ENCODE measurements at regions of chr3 and their contacts with region 1.

Region 1: GRCh38 chr3:194315088-194315964 is 35.8 kb downstream of the CPN2 start:
- DNase-seq: peak; percentile 88 to 91
- ATAC-seq: peak; percentile 85 to 90 (median 88)
- H3K4me3 ChIP-seq: peak overlapping the region; percentile 63
- H3K27ac ChIP-seq: no peak overlapping the region
- H3K4me1 ChIP-seq: peaks cover 7% of the 10 kb centered on the region
- H3K27me3 ChIP-seq: peaks cover 0 to 36% (median 5%) of the 10 kb centered on the region in 3 donors
- CTCF ChIP-seq: peak; percentile 98

Region 2: GRCh38 chr3:193780810-193781472 is 534.4 kb before region 1 on chr3:
- intact Hi-C with region 1: loop called (anchors 2 kb)
- DNase-seq: peak; percentile 73 to 81
- ATAC-seq: peak; percentile 86 to 96 (median 88)
- H3K4me3 ChIP-seq: no peak overlapping the region
- H3K27ac ChIP-seq: no peak overlapping the region
- H3K4me1 ChIP-seq: no peaks in the 10 kb centered on the region
- H3K27me3 ChIP-seq: peaks cover 0 to 15% (median 0%) of the 10 kb centered on the region in 3 donors
- CTCF ChIP-seq: peak; percentile 75

Region 3: GRCh38 chr3:194003125-194004057 is 311.9 kb before region 1 on chr3:
- intact Hi-C with region 1: loop called (anchors 5 to 10 kb)
- DNase-seq: peak; percentile 89 to 95
- ATAC-seq: peak; percentile 78 to 91 (median 82)
- H3K4me3 ChIP-seq: peak overlapping the region; percentile 60
- H3K27ac ChIP-seq: peak overlapping the region; percentile 88
- H3K4me1 ChIP-seq: peaks cover 47% of the 10 kb centered on the region
- H3K27me3 ChIP-seq: no peaks in the 10 kb centered on the region
- CTCF ChIP-seq: no peak

Region 4: GRCh38 chr3:194070634-194071409 is 244.5 kb before region 1 on chr3:
- intact Hi-C with region 1: loop called in 1 of 2 experiments (anchors 5 kb)
- DNase-seq: peak; percentile 90 to 93
- ATAC-seq: peak; percentile 89 to 94 (median 91)
- H3K4me3 ChIP-seq: peak overlapping the region; percentile 62
- H3K27ac ChIP-seq: peak overlapping the region; percentile 87
- H3K4me1 ChIP-seq: peaks cover 18% of the 10 kb centered on the region
- H3K27me3 ChIP-seq: no peaks in the 10 kb centered on the region
- CTCF ChIP-seq: no peak

Region 5: GRCh38 chr3:194158922-194159439 is 156.3 kb before region 1 on chr3:
- intact Hi-C with region 1: loop called in 1 of 2 experiments (anchors 5 kb)
- DNase-seq: no peak
- ATAC-seq: peak; percentile 58 to 93 (median 86)
- H3K4me3 ChIP-seq: no peak overlapping the region
- H3K27ac ChIP-seq: no peak overlapping the region
- H3K4me1 ChIP-seq: no peaks in the 10 kb centered on the region
- H3K27me3 ChIP-seq: no peaks in the 10 kb centered on the region
- CTCF ChIP-seq: no peak

Region 6: DNA sequence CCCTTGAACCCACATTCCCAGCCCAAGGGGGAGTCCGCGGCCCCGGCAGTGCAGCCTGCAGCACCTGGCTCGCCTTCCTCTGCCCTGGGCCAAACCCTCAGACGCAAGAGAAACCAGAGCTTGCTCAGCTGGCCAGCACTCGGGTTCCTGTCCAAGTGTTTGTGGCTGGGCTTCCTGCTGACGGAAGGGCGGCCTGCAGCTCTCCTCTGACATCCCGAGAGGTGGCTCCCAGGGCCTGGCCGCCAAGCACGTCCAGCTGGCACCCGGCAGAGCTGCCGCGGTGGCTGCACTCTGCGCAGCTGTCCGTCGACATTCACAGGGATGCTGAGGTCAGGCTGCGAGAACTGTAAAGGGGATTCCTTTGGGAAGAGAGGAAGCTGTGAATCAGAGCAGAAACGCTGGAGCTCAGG is 49.8 kb before region 1 on chr3:
- intact Hi-C with region 1: loop called (anchors 5 kb)
- DNase-seq: peak; percentile 91 to 97
- ATAC-seq: peak; percentile 95 to 97 (median 97)
- H3K4me3 ChIP-seq: no peak overlapping the region
- H3K27ac ChIP-seq: peak overlapping the region; percentile 64
- H3K4me1 ChIP-seq: peaks cover 25% of the 10 kb centered on the region
- H3K27me3 ChIP-seq: no peaks in the 10 kb centered on the region
- CTCF ChIP-seq: no peak

Region 7: DNA sequence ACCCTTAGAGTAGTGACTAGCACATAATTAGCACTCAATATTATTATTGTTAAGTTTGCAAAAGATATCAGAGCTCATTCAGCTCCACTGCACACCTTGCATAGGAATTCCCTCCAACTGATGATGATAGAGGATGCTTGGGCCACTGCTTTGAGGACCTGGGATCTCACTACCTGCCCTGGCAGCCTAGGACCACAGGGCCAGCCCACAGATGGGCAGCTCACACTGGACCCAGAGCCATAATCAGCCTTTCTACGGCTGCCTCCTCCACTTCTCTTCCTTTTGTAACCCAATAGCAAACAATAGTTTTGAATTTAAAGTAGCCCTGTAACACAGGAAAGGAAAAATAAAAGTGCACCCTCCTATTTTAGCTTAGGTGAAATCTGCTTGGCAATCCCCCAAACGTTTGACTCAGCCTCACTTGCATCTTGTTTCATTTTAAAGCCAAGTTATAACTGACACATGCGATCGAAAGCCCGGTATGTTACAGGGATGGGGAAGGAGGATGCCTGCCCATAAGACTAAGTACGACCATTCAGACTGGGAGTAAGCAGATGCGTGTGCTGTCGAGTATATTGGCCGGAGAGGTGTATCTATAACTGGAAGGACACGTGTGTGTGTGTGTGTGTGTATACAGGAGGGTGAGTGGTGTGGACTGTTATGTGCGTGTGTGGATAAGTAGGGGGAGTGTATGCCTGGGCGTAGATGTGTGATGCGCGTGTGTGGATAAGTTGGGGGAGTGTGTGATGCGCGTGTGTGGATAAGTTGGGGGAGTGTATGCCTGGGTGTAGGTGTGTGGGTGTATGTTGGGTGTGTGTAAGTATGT is 30.1 kb before region 1 on chr3:
- intact Hi-C with region 1: loop called in 1 of 2 experiments (anchors 1 kb)
- DNase-seq: peak in 1 of 2 donors; percentile 2
- ATAC-seq: peak in 2 of 4 donors; percentile 16 to 33
- H3K4me3 ChIP-seq: no peak overlapping the region
- H3K27ac ChIP-seq: no peak overlapping the region
- H3K4me1 ChIP-seq: no peaks in the 10 kb centered on the region
- H3K27me3 ChIP-seq: no peaks in the 10 kb centered on the region
- CTCF ChIP-seq: no peak

Region 8: DNA sequence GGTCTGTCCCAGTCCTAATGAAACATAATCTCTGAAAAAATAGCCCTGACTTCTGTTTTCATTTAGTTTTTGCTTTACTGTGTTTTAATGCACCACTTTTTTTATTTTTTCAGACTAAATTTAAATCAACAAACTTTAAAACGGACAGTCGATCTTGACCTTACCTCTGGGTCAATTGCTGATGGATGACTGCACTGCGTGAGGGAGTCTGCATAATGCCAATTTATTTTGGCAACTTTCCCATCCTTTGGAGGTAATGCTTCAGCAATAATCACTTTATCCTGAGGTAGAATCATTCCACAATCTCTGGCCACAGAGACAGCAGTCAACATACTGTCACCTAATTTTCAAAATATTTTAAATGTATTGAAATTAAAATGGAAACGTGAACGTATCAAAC is 116.2 kb after region 1 on chr3:
- intact Hi-C with region 1: no loop called
- DNase-seq: no peak
- ATAC-seq: no peak
- H3K4me3 ChIP-seq: no peak overlapping the region
- H3K27ac ChIP-seq: no peak overlapping the region
- H3K4me1 ChIP-seq: no peaks in the 10 kb centered on the region
- H3K27me3 ChIP-seq: no peaks in the 10 kb centered on the region
- CTCF ChIP-seq: no peak

Region 9: DNA sequence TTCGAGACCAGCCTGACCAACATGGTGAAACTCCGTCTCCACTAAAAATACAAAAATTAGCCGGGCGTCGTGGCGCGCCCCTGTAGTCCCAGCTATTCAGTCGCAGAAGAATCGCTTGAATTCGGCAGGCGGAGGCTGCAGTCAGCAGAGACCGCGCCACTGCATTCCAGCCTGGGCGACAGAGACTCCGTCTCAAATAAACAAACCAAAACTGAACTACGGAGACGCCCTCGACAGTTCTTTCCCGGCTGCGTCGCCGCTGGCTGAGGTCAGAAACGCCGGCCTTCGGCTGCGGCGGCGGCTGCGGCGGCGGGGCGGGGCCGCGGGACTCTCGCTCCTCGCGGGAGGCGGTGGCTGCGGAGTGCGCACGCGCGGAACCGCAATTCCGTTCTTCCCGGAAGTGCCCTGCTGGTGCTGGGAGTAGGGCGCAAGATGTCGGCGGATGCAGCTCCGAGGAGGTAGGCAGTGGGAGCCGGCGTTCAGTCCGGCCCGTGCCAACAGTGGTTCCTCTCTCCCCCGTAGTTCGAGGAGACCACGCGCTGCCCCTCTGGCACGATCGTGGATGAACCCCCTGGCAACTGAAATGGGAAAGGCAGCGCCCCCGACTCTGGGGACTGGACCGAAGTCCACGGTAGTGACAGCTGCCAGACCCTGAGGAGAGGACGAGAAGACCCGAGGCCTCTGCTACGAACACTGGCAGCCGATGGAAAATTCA is 268.4 kb after region 1 on chr3:
- intact Hi-C with region 1: no loop called
- DNase-seq: peak; percentile 95 to 98
- ATAC-seq: peak; percentile 95 to 100 (median 98)
- H3K4me3 ChIP-seq: peak overlapping the region; percentile 81
- H3K27ac ChIP-seq: peak overlapping the region; percentile 92
- H3K4me1 ChIP-seq: peaks cover 8% of the 10 kb centered on the region
- H3K27me3 ChIP-seq: no peaks in the 10 kb centered on the region
- CTCF ChIP-seq: no peak